Naive thymus-derived CD4-positive, alpha-beta T cell (primary cell): ENCODE measurements at regions of chr18 and their contacts with region 1.

Region 1: GRCh38 chr18:35029770-35030169 is 11.4 kb upstream of the MAPRE2 start:
- DNase-seq: peak in 7 of 9 donors; percentile 34 to 58 (median 55)
- ATAC-seq: peak; percentile 65
- H3K4me3 ChIP-seq: peak overlapping the region; percentile 41
- H3K4me3 Mint-ChIP-seq: peak overlapping the region; percentile 78 to 93 (median 88)
- H3K27ac ChIP-seq: peak overlapping the region; percentile 79
- H3K27ac Mint-ChIP-seq: peak overlapping the region; percentile 89 to 98 (median 96)
- H3K4me1 ChIP-seq: peaks cover 34 to 53% of the 10 kb centered on the region in 2 donors
- H3K4me1 Mint-ChIP-seq: peaks cover 34 to 75% (median 69%) of the 10 kb centered on the region in 7 donors
- H3K27me3 ChIP-seq: no peaks in the 10 kb centered on the region
- H3K27me3 Mint-ChIP-seq: no peaks in the 10 kb centered on the region

Region 2: DNA sequence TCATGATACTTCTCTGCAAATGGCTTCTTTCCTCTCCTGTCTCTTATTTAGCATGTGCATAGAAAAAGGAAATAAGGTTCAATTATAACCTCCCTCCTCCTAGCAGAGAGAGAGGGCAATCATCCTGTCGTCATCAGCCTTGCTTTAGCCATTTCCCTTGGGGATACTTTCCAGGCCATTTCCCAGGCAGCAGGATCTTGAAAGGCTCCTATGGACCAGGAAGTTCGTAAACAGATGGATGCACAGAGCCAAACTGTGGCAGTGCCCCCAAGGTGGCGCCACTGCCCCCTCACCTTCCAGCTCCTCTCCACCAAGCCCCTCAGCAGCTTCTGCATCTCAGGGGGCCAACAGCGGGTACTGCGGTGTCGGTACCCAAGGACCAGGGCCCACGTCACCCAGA is 162.2 kb before region 1 on chr18:
- CTCF ChIA-PET with region 1: interaction called, 4 read pairs
- POLR2A ChIA-PET with region 1: no interaction called
- intact Hi-C with region 1: loop called (anchors 1 to 5 kb)
- DNase-seq: no peak
- ATAC-seq: no peak
- H3K4me3 ChIP-seq: no peak overlapping the region
- H3K4me3 Mint-ChIP-seq: no peak overlapping the region
- H3K27ac ChIP-seq: no peak overlapping the region
- H3K27ac Mint-ChIP-seq: no peak overlapping the region
- H3K4me1 ChIP-seq: no peaks in the 10 kb centered on the region
- H3K4me1 Mint-ChIP-seq: peaks cover 0 to 24% (median 9%) of the 10 kb centered on the region in 7 donors
- H3K27me3 ChIP-seq: no peaks in the 10 kb centered on the region
- H3K27me3 Mint-ChIP-seq: peaks cover 0 to 10% (median 0%) of the 10 kb centered on the region in 5 donors

Region 3: GRCh38 chr18:34929336-34929780 is 100.4 kb before region 1 on chr18:
- CTCF ChIA-PET with region 1: no interaction called
- POLR2A ChIA-PET with region 1: no interaction called
- intact Hi-C with region 1: no loop called
- DNase-seq: no peak
- ATAC-seq: no peak
- H3K4me3 ChIP-seq: no peak overlapping the region
- H3K4me3 Mint-ChIP-seq: no peak overlapping the region
- H3K27ac ChIP-seq: no peak overlapping the region
- H3K27ac Mint-ChIP-seq: no peak overlapping the region
- H3K4me1 ChIP-seq: no peaks in the 10 kb centered on the region
- H3K4me1 Mint-ChIP-seq: no peaks in the 10 kb centered on the region
- H3K27me3 ChIP-seq: no peaks in the 10 kb centered on the region
- H3K27me3 Mint-ChIP-seq: peaks cover 6 to 10% (median 7%) of the 10 kb centered on the region in 5 donors

Region 4: DNA sequence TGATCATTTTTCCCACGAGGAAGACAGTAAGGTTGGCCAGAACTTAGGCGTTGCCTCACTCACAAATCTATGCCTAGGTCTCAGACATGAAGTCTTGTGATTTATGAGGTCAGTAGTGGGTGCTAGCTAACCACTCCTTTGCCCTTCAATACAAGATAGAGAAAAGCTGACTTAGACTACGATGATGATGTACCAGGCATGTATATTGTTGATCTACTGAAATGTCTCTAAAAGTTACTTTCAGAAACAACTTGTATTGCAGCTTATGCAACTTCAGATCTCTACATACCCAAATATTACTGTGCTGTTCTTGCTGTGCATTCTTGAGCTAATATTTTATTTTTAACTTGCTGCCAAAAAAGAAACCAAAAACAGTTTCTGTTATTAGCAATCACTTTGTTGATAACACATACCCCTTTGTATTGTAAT is 42.1 kb after region 1 on chr18:
- CTCF ChIA-PET with region 1: interaction called, 3 read pairs
- POLR2A ChIA-PET with region 1: interaction called, 4 read pairs
- intact Hi-C with region 1: loop called in 1 of 2 experiments (anchors 2 kb)
- DNase-seq: no peak
- ATAC-seq: peak; percentile 31
- H3K4me3 ChIP-seq: no peak overlapping the region
- H3K4me3 Mint-ChIP-seq: no peak overlapping the region
- H3K27ac ChIP-seq: no peak overlapping the region
- H3K27ac Mint-ChIP-seq: peak overlapping the region in 6 of 9 donors; percentile 2 to 83 (median 48)
- H3K4me1 ChIP-seq: peaks cover 0 to 5% of the 10 kb centered on the region in 2 donors
- H3K4me1 Mint-ChIP-seq: peaks cover 21 to 91% (median 69%) of the 10 kb centered on the region in 7 donors
- H3K27me3 ChIP-seq: no peaks in the 10 kb centered on the region
- H3K27me3 Mint-ChIP-seq: no peaks in the 10 kb centered on the region

Region 5: GRCh38 chr18:35185771-35186170 is 156.0 kb after region 1 on chr18:
- CTCF ChIA-PET with region 1: interaction called, 6 read pairs
- POLR2A ChIA-PET with region 1: interaction called, 3 read pairs
- intact Hi-C with region 1: loop called in 1 of 2 experiments (anchors 1 kb)
- DNase-seq: peak in 1 of 9 donors; percentile 4
- ATAC-seq: no peak
- H3K4me3 ChIP-seq: no peak overlapping the region
- H3K4me3 Mint-ChIP-seq: no peak overlapping the region
- H3K27ac ChIP-seq: no peak overlapping the region
- H3K27ac Mint-ChIP-seq: no peak overlapping the region
- H3K4me1 ChIP-seq: no peaks in the 10 kb centered on the region
- H3K4me1 Mint-ChIP-seq: no peaks in the 10 kb centered on the region
- H3K27me3 ChIP-seq: no peaks in the 10 kb centered on the region
- H3K27me3 Mint-ChIP-seq: peaks cover 0 to 6% (median 0%) of the 10 kb centered on the region in 5 donors

Region 6: GRCh38 chr18:35290073-35290735 is 260.4 kb after region 1 on chr18 and contains the start of gene ZSCAN30:
- CTCF ChIA-PET with region 1: no interaction called
- POLR2A ChIA-PET with region 1: interaction called, 3 read pairs
- intact Hi-C with region 1: loop called in 1 of 2 experiments (anchors 1 kb)
- DNase-seq: peak; percentile 90 to 96 (median 94)
- ATAC-seq: peak; percentile 99
- H3K4me3 ChIP-seq: peak within 1 kb of the TSS; percentile 90
- H3K4me3 Mint-ChIP-seq: peak within 1 kb of the TSS; percentile 97 to 99 (median 98)
- H3K27ac ChIP-seq: peak within 1 kb of the TSS; percentile 86
- H3K27ac Mint-ChIP-seq: peak within 1 kb of the TSS; percentile 94 to 100 (median 98)
- H3K4me1 ChIP-seq: peaks cover 16 to 18% of the 10 kb centered on the region in 2 donors
- H3K4me1 Mint-ChIP-seq: peaks cover 29 to 86% (median 75%) of the 10 kb centered on the region in 7 donors
- H3K27me3 ChIP-seq: no peaks in the 10 kb centered on the region
- H3K27me3 Mint-ChIP-seq: no peaks in the 10 kb centered on the region
- total RNA-seq, gene ZSCAN30: 14.0 to 23.2 (median 20.8) TPM

Region 7: DNA sequence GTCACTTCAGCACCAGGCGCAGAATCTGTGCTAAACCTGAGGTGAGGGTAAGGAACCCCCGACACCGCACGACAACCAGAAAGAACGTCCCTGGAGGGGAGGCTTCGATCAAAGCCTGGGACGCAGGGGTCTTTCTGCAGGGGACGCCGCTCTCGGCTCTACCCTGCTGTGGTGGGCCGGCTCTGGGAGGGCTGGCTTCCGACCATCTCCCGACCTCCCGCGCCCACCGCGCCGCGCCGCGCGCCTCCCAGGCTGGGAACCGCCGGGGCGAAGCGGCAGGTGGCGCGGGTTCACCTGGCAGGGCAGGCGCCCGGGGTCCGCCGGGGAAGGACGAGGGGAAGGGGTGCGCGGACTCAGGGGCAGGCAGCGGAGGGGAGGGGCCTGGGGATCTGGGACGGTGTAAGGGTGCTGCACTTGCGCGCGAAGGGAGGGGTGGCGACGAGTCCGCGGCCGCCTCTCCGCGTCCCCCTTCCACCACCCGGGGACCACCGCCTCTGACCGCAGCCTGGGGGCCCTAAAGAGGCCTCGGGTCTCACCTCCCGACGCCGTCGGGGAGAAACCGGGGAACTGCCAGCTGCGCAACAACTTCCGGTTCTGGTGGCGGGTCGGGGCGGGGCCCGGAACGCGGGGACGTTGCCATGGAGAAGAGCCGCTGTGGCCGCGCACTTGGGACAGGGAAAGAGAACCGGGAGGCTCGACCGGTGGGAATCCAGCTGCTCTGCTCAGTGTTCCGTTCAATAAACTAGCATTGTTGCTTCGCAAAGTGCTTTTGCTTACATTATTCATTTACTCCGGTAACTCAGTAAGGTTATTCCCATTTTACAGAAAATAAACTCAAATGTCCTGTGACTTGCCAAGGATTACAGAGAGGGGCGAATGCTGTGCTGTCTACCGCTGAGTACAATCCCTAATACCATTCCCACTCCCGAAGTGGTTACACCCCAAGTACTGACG is 347.2 kb after region 1 on chr18 and contains the start of gene ZNF396:
- CTCF ChIA-PET with region 1: no interaction called
- POLR2A ChIA-PET with region 1: interaction called, 3 read pairs
- intact Hi-C with region 1: loop called in 1 of 2 experiments (anchors 2 kb)
- DNase-seq: peak; percentile 51 to 72 (median 58)
- ATAC-seq: peak; percentile 81
- H3K4me3 ChIP-seq: peak within 1 kb of the TSS; percentile 75
- H3K4me3 Mint-ChIP-seq: peak within 1 kb of the TSS; percentile 80 to 92 (median 88)
- H3K27ac ChIP-seq: peak within 1 kb of the TSS; percentile 55
- H3K27ac Mint-ChIP-seq: peak within 1 kb of the TSS; percentile 44 to 90 (median 74)
- H3K4me1 ChIP-seq: no peaks in the 10 kb centered on the region
- H3K4me1 Mint-ChIP-seq: peaks cover 3 to 12% (median 10%) of the 10 kb centered on the region in 7 donors
- H3K27me3 ChIP-seq: no peaks in the 10 kb centered on the region
- H3K27me3 Mint-ChIP-seq: peaks cover 0 to 29% (median 0%) of the 10 kb centered on the region in 5 donors
- total RNA-seq, gene ZNF396: 0.11 to 8.2 (median 0.54) TPM

Region 8: DNA sequence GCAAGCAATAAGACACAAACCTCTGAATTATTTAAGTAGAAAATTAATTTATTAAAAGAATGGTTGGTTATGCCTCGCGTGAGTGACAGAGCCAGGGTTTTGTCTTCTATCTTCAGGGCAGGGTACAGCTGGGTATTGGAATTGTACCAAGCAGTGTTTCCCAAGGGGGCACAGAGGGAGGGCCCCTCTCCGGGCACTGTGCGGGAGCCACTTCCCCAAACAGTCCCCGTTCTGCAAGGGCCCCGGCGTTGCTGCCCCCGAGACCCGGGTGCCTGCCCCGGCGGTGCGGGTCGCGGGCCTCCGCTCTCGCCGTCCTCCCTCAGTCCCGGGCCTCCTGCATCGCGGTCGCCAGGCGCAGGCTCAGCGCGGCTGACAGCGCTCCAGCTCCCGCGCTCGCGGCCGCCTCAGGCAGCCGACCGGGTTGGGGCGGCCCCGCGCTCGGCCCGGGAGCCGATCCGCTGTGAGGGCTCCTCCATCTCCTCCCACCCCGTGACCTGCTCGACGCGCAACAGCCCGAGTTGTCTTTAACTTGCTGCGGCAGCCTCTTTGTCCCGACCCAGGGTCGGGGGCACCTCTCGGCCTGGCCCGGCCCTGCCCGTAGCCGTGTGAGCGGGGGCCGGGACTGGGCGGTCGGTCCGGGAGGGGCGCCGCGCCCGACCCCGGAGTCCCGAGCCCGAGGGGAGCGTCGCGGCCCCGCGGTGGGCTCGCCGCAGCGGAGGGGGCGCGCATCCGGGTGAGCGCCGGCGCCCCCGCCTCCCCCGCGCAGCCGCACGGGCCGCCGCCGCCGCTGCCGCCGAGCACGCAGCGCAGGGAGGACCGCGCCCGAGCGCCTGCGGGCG is 551.1 kb after region 1 on chr18:
- CTCF ChIA-PET with region 1: no interaction called
- POLR2A ChIA-PET with region 1: no interaction called
- intact Hi-C with region 1: loop called in 1 of 2 experiments (anchors 5 kb)
- DNase-seq: peak; percentile 54 to 70 (median 63)
- ATAC-seq: peak; percentile 84
- H3K4me3 ChIP-seq: peak overlapping the region; percentile 61
- H3K4me3 Mint-ChIP-seq: peak overlapping the region; percentile 60 to 80 (median 72)
- H3K27ac ChIP-seq: peak overlapping the region; percentile 77
- H3K27ac Mint-ChIP-seq: peak overlapping the region in 5 of 9 donors; percentile 37 to 80 (median 63)
- H3K4me1 ChIP-seq: peaks cover 11% of the 10 kb centered on the region in 2 donors
- H3K4me1 Mint-ChIP-seq: peaks cover 13 to 39% (median 28%) of the 10 kb centered on the region in 7 donors
- H3K27me3 ChIP-seq: no peaks in the 10 kb centered on the region
- H3K27me3 Mint-ChIP-seq: peaks cover 0 to 18% (median 7%) of the 10 kb centered on the region in 5 donors